MCF 10A (cell line): ENCODE measurements at regions of chr3 and their contacts with region 1.

Region 1: GRCh38 chr3:158790901-158791589 is 10.8 kb upstream of the MFSD1 start:
- DNase-seq: peak; percentile 71
- H3K4me3 Mint-ChIP-seq: peak overlapping the region; percentile 63
- H3K27ac Mint-ChIP-seq: no peak overlapping the region
- H3K4me1 Mint-ChIP-seq: peaks cover 20% of the 10 kb centered on the region
- H3K27me3 Mint-ChIP-seq: no peaks in the 10 kb centered on the region
- CTCF ChIP-seq: peak; percentile 79

Region 2: DNA sequence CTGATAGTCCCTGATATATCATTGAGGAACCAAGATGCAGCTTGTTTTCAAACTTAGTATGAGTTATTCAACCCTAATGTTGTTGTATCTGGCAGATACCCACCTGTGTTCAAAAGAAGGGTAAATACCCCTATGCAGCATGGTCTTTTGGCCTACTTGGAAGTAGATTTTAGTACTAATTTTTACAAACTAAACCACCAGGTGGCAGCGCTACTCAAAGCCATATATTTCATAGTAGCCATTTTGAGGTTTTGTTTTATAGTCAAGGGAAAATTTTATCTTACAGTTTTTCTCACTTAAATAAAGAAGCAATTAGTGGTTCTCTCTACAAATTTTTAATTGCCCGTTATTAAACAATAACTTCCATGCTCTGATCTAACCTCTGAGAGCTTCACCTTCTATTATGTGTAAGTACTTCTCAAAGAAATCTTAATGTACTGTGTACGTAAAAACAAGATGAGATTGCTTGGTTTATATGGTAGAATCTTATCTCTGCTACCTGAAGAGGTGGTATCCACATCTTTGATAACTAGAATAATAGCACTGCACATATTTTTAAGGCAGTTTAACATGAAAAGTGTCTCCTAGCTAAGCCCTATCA is 251.5 kb before region 1 on chr3:
- CTCF ChIA-PET with region 1: interaction called, 5 read pairs
- POLR2A ChIA-PET with region 1: no interaction called
- intact Hi-C with region 1: loop called (anchors 1 kb)
- DNase-seq: peak; percentile 61
- H3K4me3 Mint-ChIP-seq: no peak overlapping the region
- H3K27ac Mint-ChIP-seq: no peak overlapping the region
- H3K4me1 Mint-ChIP-seq: no peaks in the 10 kb centered on the region
- H3K27me3 Mint-ChIP-seq: no peaks in the 10 kb centered on the region
- CTCF ChIP-seq: peak; percentile 51

Region 3: DNA sequence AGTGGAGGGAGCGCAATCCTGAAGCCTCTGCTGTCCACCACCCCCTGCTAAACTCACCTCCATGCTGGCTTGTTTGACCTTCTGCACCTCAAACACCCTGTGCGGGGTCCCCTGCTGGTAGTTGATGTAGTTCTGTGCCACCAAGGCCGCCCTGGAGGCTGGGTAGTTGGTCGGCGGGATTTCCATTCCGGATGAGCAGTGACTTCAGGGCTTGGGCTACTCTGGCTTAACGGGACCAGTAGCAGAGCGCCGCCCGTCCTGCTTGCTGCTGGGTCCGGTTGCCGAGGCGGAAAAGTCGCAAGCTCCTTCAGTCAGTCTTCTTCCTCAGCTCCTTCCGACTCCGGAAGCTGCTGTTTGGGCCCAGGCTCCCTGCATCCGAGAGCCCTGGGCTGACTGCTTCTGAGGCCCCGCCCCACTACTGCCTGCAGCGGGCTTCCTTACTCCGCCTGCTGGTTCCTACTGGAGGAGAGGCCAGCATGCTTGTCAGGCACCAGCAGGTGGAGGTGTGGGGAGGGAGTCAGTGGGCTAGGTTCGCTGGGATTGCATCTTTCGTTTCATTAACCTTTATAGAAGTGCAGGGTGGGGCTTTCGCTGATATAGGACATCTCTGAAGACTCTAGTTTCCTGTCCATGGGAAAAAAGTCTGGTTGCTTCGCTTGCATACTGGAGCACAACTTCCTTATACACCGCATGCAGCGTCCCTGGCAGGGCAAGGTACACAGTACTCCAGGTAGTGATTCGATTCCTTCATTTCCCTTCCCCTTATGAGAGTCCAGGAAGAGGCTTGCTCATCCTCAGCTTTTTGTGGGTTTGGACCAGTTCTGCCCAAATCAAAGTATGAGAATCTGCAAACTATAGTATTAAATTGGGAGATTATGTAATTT is 118.5 kb before region 1 on chr3 and contains the start of gene LXN:
- CTCF ChIA-PET with region 1: interaction called, 6 read pairs
- POLR2A ChIA-PET with region 1: interaction called, 3 read pairs
- intact Hi-C with region 1: loop called (anchors 1 kb)
- DNase-seq: peak; percentile 92
- H3K4me3 Mint-ChIP-seq: peak within 1 kb of the TSS; percentile 79
- H3K27ac Mint-ChIP-seq: peak within 1 kb of the TSS; percentile 87
- H3K4me1 Mint-ChIP-seq: peaks cover 16% of the 10 kb centered on the region
- H3K27me3 Mint-ChIP-seq: no peaks in the 10 kb centered on the region
- CTCF ChIP-seq: peak; percentile 51
- total RNA-seq, gene LXN: 3.4 and 4.4 TPM in 2 replicates

Region 4: DNA sequence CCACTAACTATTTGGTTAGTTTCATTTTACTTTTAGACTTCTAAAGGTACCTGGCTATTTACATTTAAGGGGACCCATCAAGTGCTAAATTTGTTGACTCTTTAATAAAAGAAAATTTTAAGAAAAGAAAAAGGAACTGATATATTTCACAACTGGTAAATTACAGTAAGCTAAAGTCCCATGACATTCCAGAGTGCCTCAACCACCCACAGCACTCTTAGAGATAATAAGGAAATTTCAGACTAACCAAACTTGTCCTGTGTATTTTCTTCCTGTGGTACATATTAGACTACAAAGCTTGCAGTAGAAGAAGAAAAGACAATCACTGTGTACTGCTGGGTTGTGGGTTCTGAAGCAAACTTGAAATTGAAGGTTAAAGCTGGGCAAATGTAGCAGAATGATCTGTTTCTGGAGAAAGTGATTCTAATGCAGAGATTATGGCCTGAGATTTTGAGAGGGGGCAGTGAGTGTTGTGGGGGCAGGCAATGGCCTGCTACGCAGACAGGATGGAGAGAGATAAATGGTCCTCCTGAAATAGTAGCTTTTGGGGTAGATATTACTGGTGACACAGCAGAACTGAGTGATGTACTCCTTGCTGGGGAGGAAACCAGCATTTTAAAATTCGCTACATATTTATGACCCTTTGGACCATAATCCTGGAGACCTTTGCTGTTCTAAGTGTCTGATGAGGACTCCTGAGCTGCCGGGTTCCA is 13.7 kb before region 1 on chr3:
- CTCF ChIA-PET with region 1: interaction called, 13 read pairs
- POLR2A ChIA-PET with region 1: interaction called, 3 read pairs
- intact Hi-C with region 1: no loop called
- DNase-seq: no peak
- H3K4me3 Mint-ChIP-seq: no peak overlapping the region
- H3K27ac Mint-ChIP-seq: no peak overlapping the region
- H3K4me1 Mint-ChIP-seq: no peaks in the 10 kb centered on the region
- H3K27me3 Mint-ChIP-seq: no peaks in the 10 kb centered on the region
- CTCF ChIP-seq: no peak

Region 5: DNA sequence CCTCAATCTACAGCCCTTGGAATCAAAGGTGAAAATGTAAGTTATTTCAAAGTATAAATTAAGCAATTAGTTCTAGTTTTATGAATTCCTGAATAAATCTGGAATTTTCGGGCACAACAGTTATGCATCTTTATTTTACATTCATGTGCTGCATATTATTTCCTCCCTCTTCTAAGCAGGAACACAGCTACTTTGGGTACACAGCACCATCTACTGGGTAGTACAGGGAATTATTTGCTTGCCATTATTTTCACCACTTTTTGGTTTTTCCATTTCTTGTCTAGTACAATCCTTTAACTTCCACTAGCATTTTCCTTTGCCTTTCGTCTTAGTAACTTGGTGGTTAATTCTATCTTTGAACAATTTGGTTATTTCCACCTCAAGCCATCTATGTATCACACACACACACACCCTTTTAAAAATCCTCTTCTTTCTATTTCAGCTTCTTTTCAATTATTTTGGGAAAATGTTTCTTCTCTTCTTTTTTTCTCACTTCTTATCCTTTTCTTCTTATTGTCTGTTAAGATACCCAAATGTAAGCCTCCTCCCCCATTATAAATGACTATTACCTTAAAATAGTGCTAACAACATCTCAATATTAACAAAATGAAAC is 461.8 kb after region 1 on chr3:
- CTCF ChIA-PET with region 1: no interaction called
- POLR2A ChIA-PET with region 1: no interaction called
- intact Hi-C with region 1: loop called (anchors 1 kb)
- DNase-seq: peak; percentile 54
- H3K4me3 Mint-ChIP-seq: no peak overlapping the region
- H3K27ac Mint-ChIP-seq: no peak overlapping the region
- H3K4me1 Mint-ChIP-seq: no peaks in the 10 kb centered on the region
- H3K27me3 Mint-ChIP-seq: peaks cover 61% of the 10 kb centered on the region
- CTCF ChIP-seq: peak; percentile 76